ENCODE measurements at regions of chr1 and their contacts with region 1.

Region 1: DNA sequence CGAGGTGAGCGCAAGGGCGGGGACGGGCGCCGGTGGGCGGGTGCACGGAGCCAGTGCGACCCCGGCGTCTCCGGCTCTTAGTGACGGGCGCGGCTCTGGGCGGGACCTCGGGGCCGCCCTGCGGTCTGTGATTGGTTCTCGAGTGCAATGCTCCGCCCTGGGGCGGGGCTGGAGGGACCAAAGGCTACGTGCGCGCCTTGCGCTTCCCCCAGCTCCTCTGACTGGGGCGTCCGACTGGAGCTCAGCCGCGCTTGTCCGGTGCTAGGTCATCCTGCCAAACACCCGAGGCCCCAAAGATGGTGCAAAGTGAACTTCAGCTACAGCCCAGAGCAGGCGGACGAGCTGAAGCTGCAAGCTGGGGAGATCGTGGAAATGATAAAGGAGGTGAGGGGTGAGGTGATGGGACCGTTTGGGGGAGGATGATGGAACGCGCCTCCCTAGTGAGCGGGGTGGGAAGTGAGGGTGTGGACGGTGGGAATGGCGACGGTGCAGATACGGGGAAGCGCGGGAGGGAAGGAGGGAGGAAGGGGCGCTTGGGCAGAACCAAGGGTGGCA is 811 bp downstream of the SH3D21 start:
- DNase-seq: peak; percentile 98
- ATAC-seq: peak; percentile 95
- H3K4me3 Mint-ChIP-seq: peak overlapping the region; percentile 99
- H3K27ac Mint-ChIP-seq: peak overlapping the region; percentile 94; the same call in 1 of the 2 replicates
- H3K4me1 Mint-ChIP-seq: peaks cover 17% of the 10 kb centered on the region
- H3K27me3 Mint-ChIP-seq: no peaks in the 10 kb centered on the region
- CTCF ChIP-seq: no peak

Region 2: GRCh38 chr1:36323597-36324352 is 16.8 kb after region 1 on chr1 and contains the start of gene EVA1B:
- CTCF ChIA-PET with region 1: interaction called, 32 read pairs
- POLR2A ChIA-PET with region 1: interaction called, 77 read pairs
- DNase-seq: peak; percentile 74
- ATAC-seq: peak; percentile 15
- H3K4me3 Mint-ChIP-seq: peak within 1 kb of the TSS; percentile 76
- H3K27ac Mint-ChIP-seq: peak within 1 kb of the TSS; percentile 65
- H3K4me1 Mint-ChIP-seq: peaks cover 25% of the 10 kb centered on the region
- H3K27me3 Mint-ChIP-seq: peaks cover 10% of the 10 kb centered on the region
- CTCF ChIP-seq: no peak
- total RNA-seq, gene EVA1B: 32.0 to 45.2 TPM (median 41.5 TPM) in 3 replicates

Region 3: GRCh38 chr1:36565576-36566501 is 258.9 kb after region 1 on chr1:
- CTCF ChIA-PET with region 1: no interaction called
- POLR2A ChIA-PET with region 1: no interaction called
- DNase-seq: no peak
- ATAC-seq: peak; percentile 89
- H3K4me3 Mint-ChIP-seq: no peak overlapping the region
- H3K27ac Mint-ChIP-seq: no peak overlapping the region
- H3K4me1 Mint-ChIP-seq: peaks cover 8% of the 10 kb centered on the region
- H3K27me3 Mint-ChIP-seq: no peaks in the 10 kb centered on the region; the same call in 1 of the 2 replicates
- CTCF ChIP-seq: no peak